Activated naive CD4-positive, alpha-beta T cell treated with anti-CD3 and anti-CD28 coated beads for 36 hours (primary cell): ENCODE measurements at regions of chr18 and their contacts with region 1.

Region 1: DNA sequence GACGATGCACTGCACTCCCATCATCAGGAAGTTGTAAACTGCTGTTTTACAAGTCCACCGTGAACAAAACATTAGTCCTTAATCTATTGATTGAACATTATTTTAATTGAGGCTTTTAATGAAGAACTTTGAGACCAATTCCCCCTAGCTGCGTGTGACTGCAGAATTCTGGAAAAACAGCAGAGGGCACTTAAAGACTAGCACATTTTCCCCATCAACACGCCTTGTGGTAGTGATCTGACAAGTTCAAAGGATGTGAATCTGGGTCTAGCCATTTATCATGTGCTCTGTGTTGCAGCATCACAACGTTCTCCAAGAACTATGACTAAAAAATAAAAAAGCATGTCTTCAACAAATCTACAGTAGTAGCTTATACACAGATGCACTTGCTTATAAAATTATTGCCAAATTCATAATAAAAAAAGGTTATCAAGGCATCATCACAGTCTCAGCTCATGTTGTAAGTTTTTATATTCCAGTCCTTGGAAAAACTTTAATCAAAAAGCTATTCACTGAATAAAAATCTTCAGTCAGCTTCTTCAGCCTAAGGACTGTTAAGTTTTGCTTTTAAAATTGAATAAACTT is 35.8 kb downstream of the SKOR2 start:
- DNase-seq: peak; percentile 53
- H3K4me3 Mint-ChIP-seq: no peak overlapping the region
- H3K27ac Mint-ChIP-seq: no peak overlapping the region
- H3K4me1 Mint-ChIP-seq: no peaks in the 10 kb centered on the region
- H3K27me3 Mint-ChIP-seq: peaks cover 24% of the 10 kb centered on the region

Region 2: GRCh38 chr18:47040982-47041381 is 174.7 kb before region 1 on chr18:
- CTCF ChIA-PET with region 1: no interaction called
- intact Hi-C with region 1: no loop called
- DNase-seq: no peak
- H3K4me3 Mint-ChIP-seq: no peak overlapping the region
- H3K27ac Mint-ChIP-seq: no peak overlapping the region
- H3K4me1 Mint-ChIP-seq: no peaks in the 10 kb centered on the region
- H3K27me3 Mint-ChIP-seq: peaks cover 5% of the 10 kb centered on the region

Region 3: GRCh38 chr18:47163241-47163640 is 52.4 kb before region 1 on chr18:
- CTCF ChIA-PET with region 1: no interaction called
- intact Hi-C with region 1: no loop called
- DNase-seq: no peak
- H3K4me3 Mint-ChIP-seq: no peak overlapping the region
- H3K27ac Mint-ChIP-seq: no peak overlapping the region
- H3K4me1 Mint-ChIP-seq: peaks cover 28% of the 10 kb centered on the region
- H3K27me3 Mint-ChIP-seq: no peaks in the 10 kb centered on the region

Region 4: GRCh38 chr18:47283476-47283875 is 67.8 kb after region 1 on chr18:
- CTCF ChIA-PET with region 1: interaction called, 4 read pairs
- intact Hi-C with region 1: loop called (anchors 5 kb)
- DNase-seq: no peak
- H3K4me3 Mint-ChIP-seq: no peak overlapping the region
- H3K27ac Mint-ChIP-seq: no peak overlapping the region
- H3K4me1 Mint-ChIP-seq: peaks cover 7% of the 10 kb centered on the region
- H3K27me3 Mint-ChIP-seq: peaks cover 18% of the 10 kb centered on the region

Region 5: DNA sequence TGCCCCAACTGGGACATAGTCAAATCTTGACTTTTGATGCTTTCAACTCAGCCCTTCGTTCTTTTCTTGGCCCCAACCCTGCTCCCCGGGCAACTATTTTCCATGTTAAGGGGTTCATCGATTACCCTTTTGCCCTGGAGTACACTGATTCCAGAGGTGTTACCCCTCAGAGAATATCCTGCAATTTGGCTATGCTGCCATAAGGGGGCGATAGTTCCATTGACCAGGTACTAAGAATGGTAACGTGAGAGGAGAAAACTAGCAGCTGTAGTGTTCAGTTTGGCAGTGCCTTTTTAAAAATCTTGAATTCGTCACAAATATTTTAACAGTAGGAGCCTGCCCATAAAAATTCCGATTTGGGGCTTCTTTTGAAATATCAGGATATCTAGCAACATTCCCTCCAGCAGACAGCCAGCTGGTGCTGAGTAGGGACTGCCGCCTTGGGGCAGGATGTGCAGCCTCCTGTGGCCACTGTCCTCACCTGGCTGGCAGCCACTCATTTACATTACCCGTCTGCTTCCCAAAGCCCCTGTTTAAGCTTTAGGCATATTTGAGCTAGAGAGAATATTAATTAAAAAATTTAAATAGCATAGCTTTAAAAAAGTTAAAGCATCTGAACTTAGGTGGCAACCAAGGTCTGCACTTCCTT is 182.1 kb after region 1 on chr18:
- CTCF ChIA-PET with region 1: no interaction called
- intact Hi-C with region 1: loop called (anchors 10 kb)
- DNase-seq: peak; percentile 47
- H3K4me3 Mint-ChIP-seq: no peak overlapping the region
- H3K27ac Mint-ChIP-seq: no peak overlapping the region
- H3K4me1 Mint-ChIP-seq: no peaks in the 10 kb centered on the region
- H3K27me3 Mint-ChIP-seq: peaks cover 1% of the 10 kb centered on the region

Region 6: DNA sequence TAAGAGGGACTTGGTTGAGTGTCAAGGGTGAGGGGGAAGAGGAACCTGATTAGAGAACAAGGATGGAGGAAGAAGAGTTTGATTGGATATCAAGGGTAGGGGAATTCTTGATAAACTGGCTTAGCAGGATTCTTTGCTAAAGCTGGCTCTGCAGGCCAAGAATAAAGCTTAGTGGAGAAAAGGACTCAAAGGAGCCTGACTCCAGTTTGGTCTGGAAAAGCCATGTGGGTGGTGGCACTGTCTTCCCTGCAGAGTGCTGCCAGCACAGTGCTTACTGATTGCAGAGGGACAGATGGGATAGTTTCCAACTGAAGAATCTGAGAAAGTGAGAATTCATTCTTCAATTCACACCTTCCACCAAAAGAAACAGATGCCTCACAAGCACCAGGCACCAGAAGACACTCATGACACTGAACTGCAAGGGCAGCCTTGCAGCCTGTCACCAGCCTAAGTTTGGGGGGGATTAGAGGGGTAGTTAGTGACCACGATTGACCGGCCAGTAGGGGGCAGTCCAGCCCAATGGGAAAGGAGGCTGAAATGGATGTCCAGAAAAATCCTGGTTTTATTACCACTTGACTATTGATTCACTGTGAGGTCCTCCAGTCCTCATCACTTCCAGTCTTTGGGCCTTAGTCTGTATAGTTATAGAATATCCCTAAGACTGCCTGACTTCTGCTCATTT is 380.3 kb after region 1 on chr18:
- CTCF ChIA-PET with region 1: no interaction called
- intact Hi-C with region 1: loop called (anchors 1 kb)
- DNase-seq: peak; percentile 18
- H3K4me3 Mint-ChIP-seq: no peak overlapping the region
- H3K27ac Mint-ChIP-seq: no peak overlapping the region
- H3K4me1 Mint-ChIP-seq: no peaks in the 10 kb centered on the region
- H3K27me3 Mint-ChIP-seq: peaks cover 21% of the 10 kb centered on the region